CD8-positive, alpha-beta memory T cell (primary cell): ENCODE measurements at regions of chr4 and their contacts with region 1.

Region 1: DNA sequence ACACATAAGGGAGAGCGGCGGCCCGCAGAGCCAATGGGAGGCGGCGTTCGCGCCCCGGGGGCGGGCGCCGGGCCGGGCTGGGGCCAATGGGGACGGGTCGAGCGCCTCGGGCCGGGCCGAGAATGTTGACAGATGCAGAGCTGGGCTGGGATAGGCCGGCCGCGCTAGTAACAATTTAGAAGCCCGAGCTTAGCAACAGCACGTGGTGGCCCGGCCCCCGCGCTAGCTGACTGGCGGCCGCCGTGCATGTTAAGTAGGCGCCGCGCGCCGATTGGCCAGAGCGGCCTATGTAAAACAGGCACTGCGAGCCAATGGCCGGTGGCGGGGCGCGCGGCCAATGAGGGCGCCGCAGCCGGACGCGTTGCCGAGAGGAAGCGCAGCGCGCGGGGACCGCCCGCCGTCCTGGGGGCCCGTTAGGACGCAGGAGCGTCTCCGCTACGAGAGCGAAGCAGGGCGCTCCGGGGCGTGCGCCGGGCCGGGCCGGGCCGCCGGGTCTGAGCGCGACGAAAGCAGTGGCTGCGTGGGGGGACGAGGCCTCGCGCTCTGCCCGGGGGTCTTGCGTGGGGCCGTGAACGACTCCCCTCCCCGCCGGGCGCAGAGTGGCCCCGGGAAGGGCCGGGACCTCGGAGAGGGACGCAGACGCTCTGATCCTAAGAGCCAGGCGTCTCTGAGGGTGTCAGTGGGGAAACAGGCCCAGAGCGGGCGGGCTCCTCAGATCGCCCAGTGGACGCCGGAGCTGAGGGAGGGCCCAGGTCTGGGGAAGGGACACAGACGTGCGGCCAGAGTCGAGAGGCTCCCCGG is 434 bp upstream of the MXD4 start:
- DNase-seq: peak; percentile 97 to 99 (median 98)
- H3K4me3 ChIP-seq: peak overlapping the region; percentile 53
- H3K4me3 Mint-ChIP-seq: peak overlapping the region; percentile 74 to 90 (median 76)
- H3K27ac ChIP-seq: peak overlapping the region; percentile 89
- H3K27ac Mint-ChIP-seq: peak overlapping the region; percentile 76 to 90 (median 86)
- H3K4me1 ChIP-seq: peaks cover 23% of the 10 kb centered on the region
- H3K4me1 Mint-ChIP-seq: peaks cover 0 to 24% (median 4%) of the 10 kb centered on the region in 3 donors
- H3K27me3 ChIP-seq: no peaks in the 10 kb centered on the region
- H3K27me3 Mint-ChIP-seq: no peaks in the 10 kb centered on the region

Region 2: DNA sequence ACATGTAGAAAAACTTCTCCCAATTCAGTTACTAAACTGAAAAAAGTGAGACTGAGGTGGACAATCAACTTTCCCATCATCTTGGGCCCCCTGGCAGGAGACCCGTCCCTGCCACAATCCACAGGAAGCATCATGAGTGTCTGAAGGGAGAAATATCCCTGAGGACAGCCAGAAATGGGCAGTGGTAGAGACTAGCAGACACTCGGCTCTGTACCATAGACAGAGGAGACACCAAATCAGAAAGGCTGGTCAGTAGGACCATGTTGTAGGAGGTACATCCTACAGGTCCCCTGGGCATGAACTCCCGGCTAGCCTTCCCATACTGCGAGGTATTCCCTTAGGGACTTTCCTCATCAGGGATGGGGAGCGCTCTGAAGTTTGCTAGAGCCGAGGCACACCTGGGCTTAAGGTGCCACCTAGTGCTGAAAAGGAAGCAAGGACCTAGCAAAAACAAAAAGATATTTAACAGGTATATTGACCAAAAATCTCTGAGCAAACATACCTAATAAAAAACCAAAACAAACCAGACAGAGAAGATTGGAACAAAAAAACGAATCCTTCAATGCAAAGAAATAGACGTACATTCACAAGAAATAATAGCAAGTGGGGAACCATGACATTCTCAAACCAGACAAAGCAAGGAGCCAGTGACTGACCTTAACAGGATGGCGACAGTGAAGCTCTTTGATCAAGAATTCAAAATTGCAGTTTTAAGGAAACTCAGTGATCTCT is 76.0 kb before region 1 on chr4:
- CTCF ChIA-PET with region 1: no interaction called
- POLR2A ChIA-PET with region 1: no interaction called
- DNase-seq: no peak
- H3K4me3 ChIP-seq: no peak overlapping the region
- H3K4me3 Mint-ChIP-seq: no peak overlapping the region
- H3K27ac ChIP-seq: no peak overlapping the region
- H3K27ac Mint-ChIP-seq: peak overlapping the region in 1 of 8 donors; percentile 25
- H3K4me1 ChIP-seq: no peaks in the 10 kb centered on the region
- H3K4me1 Mint-ChIP-seq: no peaks in the 10 kb centered on the region
- H3K27me3 ChIP-seq: no peaks in the 10 kb centered on the region
- H3K27me3 Mint-ChIP-seq: peaks cover 0 to 2% of the 10 kb centered on the region in 2 donors

Region 3: DNA sequence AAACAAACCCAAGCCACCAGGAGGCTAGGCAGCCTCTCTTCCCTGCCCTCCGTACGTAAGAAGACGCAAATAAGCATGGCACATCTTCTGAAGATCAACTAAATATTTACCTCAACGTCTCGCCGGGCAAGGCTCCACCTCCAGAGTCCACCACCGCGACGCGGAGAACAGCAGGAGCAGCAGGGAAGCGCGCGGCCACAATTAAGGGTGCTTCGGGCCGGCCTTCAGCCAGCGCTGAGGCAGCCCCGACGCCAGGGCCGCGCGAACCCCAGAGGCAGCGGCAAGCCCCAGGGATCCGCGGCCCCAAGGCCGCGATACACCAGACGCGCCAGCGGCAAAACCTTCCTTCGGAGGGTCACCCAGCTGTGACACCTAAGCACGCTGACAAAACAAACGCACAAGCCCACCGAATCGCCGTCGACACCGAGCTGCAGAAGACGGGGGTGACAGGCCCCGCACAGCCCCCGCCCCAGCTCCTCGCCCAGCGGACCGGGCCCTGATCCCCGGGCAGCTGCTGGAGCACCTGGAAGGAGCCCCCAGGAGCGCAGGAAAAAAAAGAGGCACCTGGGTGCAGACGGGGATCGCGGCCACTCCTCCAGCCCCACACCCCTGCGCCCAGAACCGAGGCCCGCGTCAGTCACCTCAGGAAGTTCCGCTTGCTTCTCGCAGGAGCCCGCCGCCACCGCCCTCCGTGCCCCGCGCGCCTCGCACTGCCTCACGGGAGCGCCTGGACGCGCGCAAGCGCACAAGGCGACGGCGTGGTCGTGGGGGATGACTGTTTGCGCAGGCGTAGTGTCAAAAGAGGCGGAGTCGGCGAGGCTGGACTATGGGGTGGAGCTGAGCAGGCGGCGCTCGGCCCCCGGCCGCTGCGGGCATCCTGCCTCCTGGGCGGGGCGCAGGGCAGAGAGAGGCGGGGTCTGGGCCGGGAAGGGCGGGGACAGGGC is 20.7 kb before region 1 on chr4 and contains the starts of genes HAUS3 and POLN:
- CTCF ChIA-PET with region 1: interaction called, 3 read pairs
- POLR2A ChIA-PET with region 1: interaction called, 29 read pairs
- DNase-seq: peak; percentile 99 to 100 (median 99)
- H3K4me3 ChIP-seq: peak within 1 kb of the TSS; percentile 81
- H3K4me3 Mint-ChIP-seq: peak within 1 kb of the TSS; percentile 88 to 95 (median 93)
- H3K27ac ChIP-seq: peak within 1 kb of the TSS; percentile 89
- H3K27ac Mint-ChIP-seq: peak within 1 kb of the TSS; percentile 90 to 98 (median 93)
- H3K4me1 ChIP-seq: peaks cover 39% of the 10 kb centered on the region
- H3K4me1 Mint-ChIP-seq: peaks cover 56 to 73% (median 66%) of the 10 kb centered on the region in 3 donors
- H3K27me3 ChIP-seq: no peaks in the 10 kb centered on the region
- H3K27me3 Mint-ChIP-seq: no peaks in the 10 kb centered on the region
- total RNA-seq, gene HAUS3: 23.8 to 23.9 TPM
- total RNA-seq, gene POLN: 1.5 to 1.6 TPM

Region 4: DNA sequence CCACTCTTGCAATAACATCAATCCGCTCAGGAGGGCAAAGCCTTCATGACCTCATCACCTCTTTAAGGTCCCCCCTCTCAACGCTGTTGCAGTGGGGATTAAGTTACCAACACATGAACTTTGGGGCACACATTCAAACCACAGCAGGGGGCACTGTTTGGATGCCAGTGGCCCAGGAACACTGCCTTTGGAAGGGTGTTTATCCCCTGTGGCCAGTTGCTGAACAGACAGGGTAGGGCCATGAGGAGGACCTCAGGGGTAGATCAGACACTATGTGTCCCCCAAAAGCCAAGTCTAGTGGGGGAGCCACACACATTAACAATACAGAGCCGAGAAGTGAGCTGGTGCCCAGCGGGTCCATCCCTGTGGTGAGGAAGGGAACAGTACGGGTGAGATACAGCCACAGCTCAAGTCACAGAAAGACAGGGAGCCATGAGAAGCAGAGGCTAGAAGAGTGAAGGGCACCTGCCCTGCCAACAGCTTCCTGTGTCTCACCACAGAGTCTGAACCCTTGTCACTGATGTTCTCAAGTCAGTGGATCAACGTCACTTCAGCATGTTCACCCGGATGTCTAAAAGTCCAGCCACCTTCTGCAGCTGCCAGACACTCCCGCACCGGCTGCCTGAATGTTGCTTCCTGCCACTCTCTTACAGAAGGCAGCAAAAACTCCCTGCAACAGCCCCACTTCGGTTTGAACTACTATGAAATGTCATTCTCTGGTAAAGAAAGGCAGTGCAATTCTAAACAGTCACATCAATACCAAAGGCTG is 19.4 kb after region 1 on chr4:
- CTCF ChIA-PET with region 1: interaction called, 5 read pairs
- POLR2A ChIA-PET with region 1: interaction called, 18 read pairs
- DNase-seq: peak; percentile 83 to 95 (median 93)
- H3K4me3 ChIP-seq: peak overlapping the region; percentile 54
- H3K4me3 Mint-ChIP-seq: peak overlapping the region; percentile 0 to 82 (median 76)
- H3K27ac ChIP-seq: peak overlapping the region; percentile 87
- H3K27ac Mint-ChIP-seq: peak overlapping the region; percentile 93 to 100 (median 100)
- H3K4me1 ChIP-seq: peaks cover 47% of the 10 kb centered on the region
- H3K4me1 Mint-ChIP-seq: peaks cover 35 to 61% (median 36%) of the 10 kb centered on the region in 3 donors
- H3K27me3 ChIP-seq: no peaks in the 10 kb centered on the region
- H3K27me3 Mint-ChIP-seq: no peaks in the 10 kb centered on the region

Region 5: GRCh38 chr4:2290974-2291704 is 28.8 kb after region 1 on chr4:
- CTCF ChIA-PET with region 1: interaction called, 5 read pairs
- POLR2A ChIA-PET with region 1: interaction called, 28 read pairs
- DNase-seq: peak; percentile 80 to 94 (median 89)
- H3K4me3 ChIP-seq: peak overlapping the region; percentile 45
- H3K4me3 Mint-ChIP-seq: peak overlapping the region; percentile 66 to 86 (median 76)
- H3K27ac ChIP-seq: peak overlapping the region; percentile 65
- H3K27ac Mint-ChIP-seq: peak overlapping the region; percentile 93 to 98 (median 96)
- H3K4me1 ChIP-seq: peaks cover 56% of the 10 kb centered on the region
- H3K4me1 Mint-ChIP-seq: peaks cover 33 to 66% (median 41%) of the 10 kb centered on the region in 3 donors
- H3K27me3 ChIP-seq: no peaks in the 10 kb centered on the region
- H3K27me3 Mint-ChIP-seq: peaks cover 0 to 2% of the 10 kb centered on the region in 2 donors

Region 6: DNA sequence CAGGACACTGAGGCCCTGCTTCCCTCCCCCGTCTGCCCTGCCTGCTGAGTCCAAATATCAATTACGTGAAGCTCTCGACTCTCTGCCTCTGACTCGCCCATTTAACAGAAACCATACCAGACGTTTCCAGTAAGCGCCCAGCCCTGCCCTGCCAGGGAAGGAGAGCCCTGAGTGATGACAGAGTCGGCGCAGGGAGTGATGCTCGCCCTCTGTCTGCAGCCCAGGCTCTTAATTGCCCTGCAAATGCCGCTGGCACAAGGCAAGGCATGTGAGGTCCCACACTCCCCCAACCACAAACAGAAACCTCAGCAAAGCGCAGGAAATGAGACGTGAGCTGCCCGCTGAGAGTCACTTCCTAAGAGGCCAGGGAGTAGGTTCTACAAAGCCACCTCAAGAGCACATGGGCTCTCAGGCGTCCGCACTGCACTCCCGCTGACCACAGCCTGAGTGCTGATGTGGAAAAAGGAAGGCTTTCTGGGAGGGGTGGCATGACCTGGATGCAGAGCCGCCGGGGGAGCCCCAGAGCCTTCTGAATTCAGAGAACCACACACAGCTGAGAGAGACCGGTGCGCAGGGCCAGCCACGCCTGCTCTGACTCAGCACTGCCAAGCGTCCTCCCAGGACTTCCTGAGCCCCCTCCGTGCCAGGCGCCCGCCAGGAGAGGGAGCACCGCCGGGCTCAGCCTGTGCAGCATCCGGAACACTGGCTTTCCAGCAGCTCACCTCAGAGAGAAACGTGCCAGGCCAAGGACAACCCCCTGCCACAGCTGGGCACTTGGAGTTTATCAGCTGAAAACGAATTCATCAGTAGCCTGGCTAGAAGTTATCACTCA is 150.8 kb after region 1 on chr4:
- CTCF ChIA-PET with region 1: interaction called, 8 read pairs
- POLR2A ChIA-PET with region 1: interaction called, 20 read pairs
- DNase-seq: peak; percentile 85 to 97 (median 92)
- H3K4me3 ChIP-seq: peak overlapping the region; percentile 48
- H3K4me3 Mint-ChIP-seq: peak overlapping the region; percentile 74 to 85 (median 78)
- H3K27ac ChIP-seq: peak overlapping the region; percentile 95
- H3K27ac Mint-ChIP-seq: peak overlapping the region; percentile 93 to 100 (median 98)
- H3K4me1 ChIP-seq: peaks cover 72% of the 10 kb centered on the region
- H3K4me1 Mint-ChIP-seq: peaks cover 60 to 88% (median 71%) of the 10 kb centered on the region in 3 donors
- H3K27me3 ChIP-seq: no peaks in the 10 kb centered on the region
- H3K27me3 Mint-ChIP-seq: peaks cover 0 to 6% of the 10 kb centered on the region in 2 donors

Region 7: GRCh38 chr4:2468445-2469192 is 206.3 kb after region 1 on chr4 and contains the start of gene RNF4:
- CTCF ChIA-PET with region 1: interaction called, 3 read pairs
- POLR2A ChIA-PET with region 1: interaction called, 18 read pairs
- DNase-seq: peak; percentile 91 to 97 (median 95)
- H3K4me3 ChIP-seq: peak within 1 kb of the TSS; percentile 87
- H3K4me3 Mint-ChIP-seq: peak within 1 kb of the TSS; percentile 92 to 98 (median 97)
- H3K27ac ChIP-seq: peak within 1 kb of the TSS; percentile 97
- H3K27ac Mint-ChIP-seq: peak within 1 kb of the TSS; percentile 98 to 99 (median 98)
- H3K4me1 ChIP-seq: peaks cover 44% of the 10 kb centered on the region
- H3K4me1 Mint-ChIP-seq: peaks cover 44 to 60% (median 50%) of the 10 kb centered on the region in 3 donors
- H3K27me3 ChIP-seq: no peaks in the 10 kb centered on the region
- H3K27me3 Mint-ChIP-seq: no peaks in the 10 kb centered on the region
- total RNA-seq, gene RNF4: 95.4 to 98.1 TPM

Region 8: DNA sequence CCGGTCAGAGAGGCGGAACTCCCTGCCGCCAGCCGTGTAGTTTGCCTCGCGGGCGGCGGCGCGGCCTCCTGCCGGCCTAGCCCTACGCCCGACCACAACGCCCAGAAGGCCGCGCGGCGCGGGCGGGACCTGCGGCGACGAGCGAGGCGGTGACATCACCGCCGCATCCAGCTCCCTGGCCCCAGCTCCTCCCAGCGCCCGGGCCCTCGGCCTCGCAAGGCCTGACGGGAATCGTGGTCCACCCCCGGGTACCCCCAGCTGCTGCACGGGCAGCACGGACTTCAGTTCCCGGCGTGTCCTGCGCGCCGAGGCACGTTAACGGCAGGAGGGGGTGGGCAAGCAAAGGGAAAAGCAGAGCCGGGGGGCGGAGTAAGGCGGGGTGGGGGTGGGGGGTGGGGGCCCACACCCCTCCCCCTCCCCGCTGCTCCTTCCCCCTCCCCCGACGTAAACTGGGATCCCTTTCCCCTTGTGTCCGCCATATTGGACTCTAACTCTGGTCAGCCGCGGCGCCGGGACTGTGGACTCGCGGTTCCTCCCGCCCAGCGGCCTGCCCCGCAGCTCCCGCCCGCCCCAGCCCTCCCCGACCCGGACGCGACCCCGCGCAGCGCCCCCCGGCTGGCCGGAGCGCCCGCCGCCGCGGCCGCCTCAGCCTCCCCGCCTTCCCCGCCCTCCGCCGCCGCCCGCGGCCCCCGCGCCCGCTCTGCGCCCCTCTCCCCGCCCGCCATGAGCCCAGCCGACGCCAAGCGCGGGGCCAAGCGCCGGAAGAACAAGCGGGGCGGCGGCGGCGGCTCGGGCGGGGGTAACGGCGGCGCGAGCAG is 274.1 kb after region 1 on chr4 and contains the start of gene FAM193A:
- CTCF ChIA-PET with region 1: no interaction called
- POLR2A ChIA-PET with region 1: interaction called, 10 read pairs
- DNase-seq: peak; percentile 97 to 100 (median 99)
- H3K4me3 ChIP-seq: peak within 1 kb of the TSS; percentile 80
- H3K4me3 Mint-ChIP-seq: peak within 1 kb of the TSS; percentile 88 to 97 (median 91)
- H3K27ac ChIP-seq: peak within 1 kb of the TSS; percentile 80
- H3K27ac Mint-ChIP-seq: peak within 1 kb of the TSS; percentile 93 to 95 (median 94)
- H3K4me1 ChIP-seq: peaks cover 27% of the 10 kb centered on the region
- H3K4me1 Mint-ChIP-seq: peaks cover 16 to 42% (median 20%) of the 10 kb centered on the region in 3 donors
- H3K27me3 ChIP-seq: no peaks in the 10 kb centered on the region
- H3K27me3 Mint-ChIP-seq: no peaks in the 10 kb centered on the region
- total RNA-seq, gene FAM193A: 25.8 to 26.9 TPM